CD8-positive, alpha-beta T cell (primary cell): ENCODE measurements at regions of chr9 and their contacts with region 1.

Region 1: GRCh38 chr9:113657703-113658544 is 194.4 kb downstream of the RGS3 start:
- DNase-seq: peak; percentile 61 to 86 (median 81)
- ATAC-seq: peak; percentile 94
- H3K4me3 ChIP-seq: no peak overlapping the region
- H3K4me3 Mint-ChIP-seq: no peak overlapping the region
- H3K27ac ChIP-seq: no peak overlapping the region
- H3K27ac Mint-ChIP-seq: no peak overlapping the region
- H3K4me1 ChIP-seq: no peaks in the 10 kb centered on the region
- H3K4me1 Mint-ChIP-seq: peaks cover 2% of the 10 kb centered on the region
- H3K27me3 ChIP-seq: no peaks in the 10 kb centered on the region
- H3K27me3 Mint-ChIP-seq: peaks cover 11% of the 10 kb centered on the region
- CTCF ChIP-seq: peak; percentile 89

Region 2: DNA sequence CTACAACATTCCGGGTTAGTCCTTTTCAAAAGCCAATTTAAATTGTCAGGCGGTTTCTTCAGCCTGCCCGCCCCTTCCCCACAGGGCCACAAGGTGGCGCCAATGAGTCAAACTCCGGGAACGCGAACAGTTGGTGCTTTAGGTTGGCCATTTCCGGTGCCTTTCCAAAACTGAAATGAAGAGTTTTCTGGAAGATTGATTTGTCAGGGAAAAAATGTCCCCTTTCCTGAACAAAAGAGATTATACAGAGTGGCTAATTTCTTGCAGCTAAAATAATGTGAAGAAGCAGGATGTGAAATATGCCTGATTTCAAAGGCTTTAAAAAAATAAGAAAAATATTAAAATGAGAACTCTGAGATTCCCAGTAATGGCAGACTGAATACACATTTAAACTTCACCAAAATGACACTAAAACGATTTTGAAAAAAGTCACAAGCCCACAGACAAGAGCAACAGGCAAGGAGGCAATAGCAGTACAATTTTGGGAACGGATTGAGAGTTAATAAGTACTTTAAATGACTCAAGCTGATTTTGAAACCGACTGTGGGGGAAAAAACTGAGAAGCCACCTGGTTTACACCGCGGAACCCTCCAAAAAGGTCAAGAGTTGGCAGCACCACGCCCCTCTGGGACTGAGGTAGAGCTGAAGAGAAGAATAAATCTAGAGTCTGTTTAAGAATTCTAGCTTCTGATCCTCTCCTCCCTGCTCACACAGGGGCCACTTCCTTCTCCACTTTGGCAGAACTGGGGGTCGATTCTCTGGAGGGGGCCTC is 813.0 kb before region 1 on chr9:
- CTCF ChIA-PET with region 1: no interaction called
- POLR2A ChIA-PET with region 1: no interaction called
- intact Hi-C with region 1: loop called (anchors 2 to 5 kb)
- DNase-seq: peak; percentile 38 to 84 (median 72)
- ATAC-seq: peak; percentile 49
- H3K4me3 ChIP-seq: no peak overlapping the region
- H3K4me3 Mint-ChIP-seq: peak overlapping the region; percentile 29
- H3K27ac ChIP-seq: no peak overlapping the region
- H3K27ac Mint-ChIP-seq: no peak overlapping the region
- H3K4me1 ChIP-seq: no peaks in the 10 kb centered on the region
- H3K4me1 Mint-ChIP-seq: peaks cover 7% of the 10 kb centered on the region
- H3K27me3 ChIP-seq: no peaks in the 10 kb centered on the region
- H3K27me3 Mint-ChIP-seq: no peaks in the 10 kb centered on the region
- CTCF ChIP-seq: peak; percentile 98

Region 3: DNA sequence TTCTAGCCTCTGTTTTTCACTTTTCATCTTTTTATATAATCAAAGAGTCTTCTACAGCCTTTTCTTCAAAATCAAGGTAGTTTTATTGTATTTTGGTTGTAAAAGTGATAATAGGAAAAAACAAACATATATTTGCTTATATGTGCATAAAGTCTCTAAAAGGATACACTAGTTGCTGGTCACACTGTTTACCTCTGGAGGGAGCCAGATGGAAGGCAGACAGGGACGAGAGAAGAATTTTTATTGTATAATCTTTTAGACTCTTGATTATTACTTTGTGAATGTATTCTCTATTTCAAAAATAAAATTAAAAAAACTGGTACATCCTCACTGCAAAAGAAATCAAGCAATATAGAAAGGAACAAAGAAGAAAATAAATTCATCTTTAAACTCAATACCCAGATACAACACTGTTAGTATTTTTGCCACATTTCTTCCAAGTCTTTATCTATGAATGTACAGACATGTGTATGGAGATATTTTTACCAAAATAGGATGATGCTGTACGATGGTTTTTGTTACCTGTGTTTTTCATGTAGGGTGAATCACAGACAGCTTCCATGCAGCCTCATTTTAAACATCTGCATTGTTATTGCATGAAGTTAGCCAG is 348.6 kb before region 1 on chr9:
- CTCF ChIA-PET with region 1: interaction called, 38 read pairs
- POLR2A ChIA-PET with region 1: no interaction called
- intact Hi-C with region 1: loop called in 1 of 2 experiments (anchors 1 kb)
- DNase-seq: peak in 5 of 9 experiments; percentile 13 to 60 (median 30)
- ATAC-seq: peak; percentile 58
- H3K4me3 ChIP-seq: no peak overlapping the region
- H3K4me3 Mint-ChIP-seq: no peak overlapping the region
- H3K27ac ChIP-seq: no peak overlapping the region
- H3K27ac Mint-ChIP-seq: no peak overlapping the region
- H3K4me1 ChIP-seq: no peaks in the 10 kb centered on the region
- H3K4me1 Mint-ChIP-seq: no peaks in the 10 kb centered on the region
- H3K27me3 ChIP-seq: no peaks in the 10 kb centered on the region
- H3K27me3 Mint-ChIP-seq: peaks cover 7% of the 10 kb centered on the region
- CTCF ChIP-seq: peak; percentile 65

Region 4: GRCh38 chr9:113446323-113446740 is 211.6 kb before region 1 on chr9:
- CTCF ChIA-PET with region 1: interaction called, 189 read pairs
- POLR2A ChIA-PET with region 1: no interaction called
- intact Hi-C with region 1: loop called (anchors 1 to 2 kb)
- DNase-seq: peak in 2 of 9 experiments; percentile 56 to 66
- ATAC-seq: peak; percentile 34
- H3K4me3 ChIP-seq: no peak overlapping the region
- H3K4me3 Mint-ChIP-seq: no peak overlapping the region
- H3K27ac ChIP-seq: no peak overlapping the region
- H3K27ac Mint-ChIP-seq: no peak overlapping the region
- H3K4me1 ChIP-seq: no peaks in the 10 kb centered on the region
- H3K4me1 Mint-ChIP-seq: peaks cover 2% of the 10 kb centered on the region
- H3K27me3 ChIP-seq: no peaks in the 10 kb centered on the region
- H3K27me3 Mint-ChIP-seq: no peaks in the 10 kb centered on the region
- CTCF ChIP-seq: peak; percentile 92

Region 5: GRCh38 chr9:113511856-113512761 is 145.8 kb before region 1 on chr9:
- CTCF ChIA-PET with region 1: interaction called, 7 read pairs
- POLR2A ChIA-PET with region 1: no interaction called
- intact Hi-C with region 1: loop called in 1 of 2 experiments (anchors 5 kb)
- DNase-seq: peak; percentile 41 to 89 (median 77)
- ATAC-seq: peak; percentile 68
- H3K4me3 ChIP-seq: peak overlapping the region; percentile 16 to 26
- H3K4me3 Mint-ChIP-seq: peak overlapping the region; percentile 74
- H3K27ac ChIP-seq: peak overlapping the region; percentile 60 to 65
- H3K27ac Mint-ChIP-seq: peak overlapping the region; percentile 90
- H3K4me1 ChIP-seq: peaks cover 59% of the 10 kb centered on the region
- H3K4me1 Mint-ChIP-seq: peaks cover 68% of the 10 kb centered on the region
- H3K27me3 ChIP-seq: no peaks in the 10 kb centered on the region
- H3K27me3 Mint-ChIP-seq: no peaks in the 10 kb centered on the region
- CTCF ChIP-seq: no peak

Region 6: GRCh38 chr9:113591001-113591898 is 66.7 kb before region 1 on chr9:
- CTCF ChIA-PET with region 1: interaction called, 85 read pairs
- POLR2A ChIA-PET with region 1: no interaction called
- intact Hi-C with region 1: loop called (anchors 2 kb)
- DNase-seq: peak in 4 of 9 experiments; percentile 48 to 60 (median 53)
- ATAC-seq: no peak
- H3K4me3 ChIP-seq: no peak overlapping the region
- H3K4me3 Mint-ChIP-seq: no peak overlapping the region
- H3K27ac ChIP-seq: no peak overlapping the region
- H3K27ac Mint-ChIP-seq: no peak overlapping the region
- H3K4me1 ChIP-seq: peaks cover 6% of the 10 kb centered on the region
- H3K4me1 Mint-ChIP-seq: peaks cover 27% of the 10 kb centered on the region
- H3K27me3 ChIP-seq: no peaks in the 10 kb centered on the region
- H3K27me3 Mint-ChIP-seq: no peaks in the 10 kb centered on the region
- CTCF ChIP-seq: peak; percentile 50

Region 7: GRCh38 chr9:113640418-113640817 is 17.5 kb before region 1 on chr9:
- CTCF ChIA-PET with region 1: interaction called, 10 read pairs
- POLR2A ChIA-PET with region 1: no interaction called
- intact Hi-C with region 1: no loop called
- DNase-seq: no peak
- ATAC-seq: no peak
- H3K4me3 ChIP-seq: no peak overlapping the region
- H3K4me3 Mint-ChIP-seq: no peak overlapping the region
- H3K27ac ChIP-seq: no peak overlapping the region
- H3K27ac Mint-ChIP-seq: no peak overlapping the region
- H3K4me1 ChIP-seq: no peaks in the 10 kb centered on the region
- H3K4me1 Mint-ChIP-seq: no peaks in the 10 kb centered on the region
- H3K27me3 ChIP-seq: no peaks in the 10 kb centered on the region
- H3K27me3 Mint-ChIP-seq: no peaks in the 10 kb centered on the region
- CTCF ChIP-seq: no peak

Region 8: DNA sequence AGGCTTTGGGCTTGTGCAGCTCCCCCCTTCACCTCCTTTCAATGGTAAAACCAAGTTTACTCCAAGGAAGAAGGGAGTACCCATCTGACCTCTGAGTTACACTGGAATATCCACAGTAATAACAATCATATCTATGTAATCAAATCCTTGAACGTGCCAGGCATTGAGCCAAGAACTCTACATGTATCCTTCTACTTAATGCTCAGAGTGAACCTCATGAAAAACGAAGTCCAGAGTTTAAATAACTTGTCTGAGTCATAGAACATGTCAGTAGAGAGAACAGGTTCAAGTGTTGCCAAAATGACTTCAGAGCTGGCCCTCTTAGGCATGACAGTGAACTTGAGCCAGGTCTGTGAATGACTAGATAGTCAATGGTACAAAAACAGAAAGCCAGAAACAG is 54.1 kb after region 1 on chr9:
- CTCF ChIA-PET with region 1: no interaction called
- POLR2A ChIA-PET with region 1: no interaction called
- intact Hi-C with region 1: no loop called
- DNase-seq: no peak
- ATAC-seq: no peak
- H3K4me3 ChIP-seq: no peak overlapping the region
- H3K4me3 Mint-ChIP-seq: no peak overlapping the region
- H3K27ac ChIP-seq: no peak overlapping the region
- H3K27ac Mint-ChIP-seq: no peak overlapping the region
- H3K4me1 ChIP-seq: no peaks in the 10 kb centered on the region
- H3K4me1 Mint-ChIP-seq: no peaks in the 10 kb centered on the region
- H3K27me3 ChIP-seq: no peaks in the 10 kb centered on the region
- H3K27me3 Mint-ChIP-seq: peaks cover 18% of the 10 kb centered on the region
- CTCF ChIP-seq: no peak